Caco-2 (cell line): ENCODE measurements at regions of chr7 and their contacts with region 1.

Region 1: DNA sequence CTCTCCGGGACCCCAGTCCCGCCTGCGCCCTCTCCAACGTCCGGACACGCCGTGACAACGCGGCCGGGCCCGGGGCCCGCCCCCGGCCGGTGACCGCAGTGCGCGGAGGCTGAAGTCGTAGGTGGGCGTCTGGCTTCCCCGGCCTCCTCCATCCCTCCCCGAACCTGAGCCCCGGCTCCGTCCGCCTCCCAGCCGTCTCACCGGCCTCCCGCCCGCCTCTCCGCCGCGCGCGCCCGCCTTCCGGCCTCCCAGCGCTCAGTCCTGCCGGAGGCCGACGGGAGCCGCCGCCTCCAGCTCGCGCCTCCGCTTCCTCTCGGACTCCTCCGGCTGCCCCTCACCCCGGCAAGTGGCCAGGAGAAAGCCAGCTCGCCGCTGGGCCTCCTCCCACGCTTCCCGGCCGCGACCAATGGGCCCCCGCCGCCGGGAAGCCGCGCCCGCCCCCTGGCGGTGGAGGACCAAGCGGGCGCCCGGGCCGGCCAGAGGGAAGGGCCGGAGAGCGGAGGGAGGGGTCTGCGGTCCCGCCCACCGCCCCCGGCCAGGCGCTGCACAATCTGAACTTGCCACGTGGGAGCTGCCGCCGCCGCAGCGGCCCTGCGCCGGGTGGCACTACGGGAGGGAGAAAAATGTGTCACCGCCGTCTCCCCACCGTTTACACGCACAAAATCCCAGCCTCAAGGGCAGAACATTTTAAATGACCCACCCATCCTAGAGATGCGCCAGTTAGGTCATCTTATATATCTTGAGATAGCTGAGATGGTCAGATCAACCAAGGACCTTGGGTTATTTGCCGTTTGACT is at the start of gene FAM3C:
- DNase-seq: peak; percentile 90 to 97
- H3K4me3 ChIP-seq: peak within 1 kb of the TSS; percentile 74
- H3K4me3 Mint-ChIP-seq: peak within 1 kb of the TSS; percentile 88
- H3K27ac Mint-ChIP-seq: peak within 1 kb of the TSS; percentile 79
- H3K4me1 ChIP-seq: peaks cover 24% of the 10 kb centered on the region
- H3K4me1 Mint-ChIP-seq: peaks cover 7% of the 10 kb centered on the region
- H3K27me3 ChIP-seq: no peaks in the 10 kb centered on the region
- H3K27me3 Mint-ChIP-seq: no peaks in the 10 kb centered on the region
- CTCF ChIP-seq: peak; percentile 49 to 90
- total RNA-seq, gene FAM3C: 40.2 and 40.5 TPM in 2 replicates

Region 2: GRCh38 chr7:121337398-121337797 is 58.8 kb before region 1 on chr7:
- CTCF ChIA-PET with region 1: no interaction called
- POLR2A ChIA-PET with region 1: no interaction called
- intact Hi-C with region 1: no loop called
- DNase-seq: no peak
- H3K4me3 ChIP-seq: no peak overlapping the region
- H3K4me3 Mint-ChIP-seq: no peak overlapping the region
- H3K27ac Mint-ChIP-seq: no peak overlapping the region
- H3K4me1 ChIP-seq: no peaks in the 10 kb centered on the region
- H3K4me1 Mint-ChIP-seq: no peaks in the 10 kb centered on the region
- H3K27me3 ChIP-seq: no peaks in the 10 kb centered on the region; the same call in 1 of the 2 replicates
- H3K27me3 Mint-ChIP-seq: peaks cover 3% of the 10 kb centered on the region
- CTCF ChIP-seq: peak in 1 of 2 experiments; percentile 2

Region 3: GRCh38 chr7:121366852-121367431 is 29.2 kb before region 1 on chr7:
- CTCF ChIA-PET with region 1: interaction called, 18 read pairs
- POLR2A ChIA-PET with region 1: interaction called, 3 read pairs
- intact Hi-C with region 1: loop called (anchors 1 kb)
- DNase-seq: peak in 1 of 2 experiments; percentile 28
- H3K4me3 ChIP-seq: no peak overlapping the region
- H3K4me3 Mint-ChIP-seq: no peak overlapping the region
- H3K27ac Mint-ChIP-seq: no peak overlapping the region
- H3K4me1 ChIP-seq: no peaks in the 10 kb centered on the region
- H3K4me1 Mint-ChIP-seq: no peaks in the 10 kb centered on the region
- H3K27me3 ChIP-seq: no peaks in the 10 kb centered on the region
- H3K27me3 Mint-ChIP-seq: no peaks in the 10 kb centered on the region
- CTCF ChIP-seq: peak; percentile 55 to 67

Region 4: GRCh38 chr7:121406944-121407343 is 10.8 kb after region 1 on chr7:
- CTCF ChIA-PET with region 1: interaction called, 6 read pairs
- POLR2A ChIA-PET with region 1: no interaction called
- intact Hi-C with region 1: loop called (anchors 1 kb)
- DNase-seq: peak; percentile 65 to 78
- H3K4me3 ChIP-seq: no peak overlapping the region
- H3K4me3 Mint-ChIP-seq: no peak overlapping the region
- H3K27ac Mint-ChIP-seq: peak overlapping the region; percentile 79
- H3K4me1 ChIP-seq: peaks cover 20% of the 10 kb centered on the region
- H3K4me1 Mint-ChIP-seq: peaks cover 15% of the 10 kb centered on the region
- H3K27me3 ChIP-seq: no peaks in the 10 kb centered on the region
- H3K27me3 Mint-ChIP-seq: no peaks in the 10 kb centered on the region
- CTCF ChIP-seq: no peak

Region 5: GRCh38 chr7:121420979-121421378 is 24.8 kb after region 1 on chr7:
- CTCF ChIA-PET with region 1: interaction called, 3 read pairs
- POLR2A ChIA-PET with region 1: interaction called, 7 read pairs
- intact Hi-C with region 1: loop called (anchors 1 kb)
- DNase-seq: peak; percentile 69 to 81
- H3K4me3 ChIP-seq: no peak overlapping the region
- H3K4me3 Mint-ChIP-seq: peak overlapping the region; percentile 37
- H3K27ac Mint-ChIP-seq: peak overlapping the region; percentile 48
- H3K4me1 ChIP-seq: peaks cover 27% of the 10 kb centered on the region
- H3K4me1 Mint-ChIP-seq: peaks cover 8% of the 10 kb centered on the region
- H3K27me3 ChIP-seq: no peaks in the 10 kb centered on the region
- H3K27me3 Mint-ChIP-seq: no peaks in the 10 kb centered on the region
- CTCF ChIP-seq: no peak

Region 6: GRCh38 chr7:121437456-121438127 is 41.4 kb after region 1 on chr7:
- CTCF ChIA-PET with region 1: interaction called, 20 read pairs
- POLR2A ChIA-PET with region 1: interaction called, 9 read pairs
- intact Hi-C with region 1: loop called (anchors 2 kb)
- DNase-seq: no peak
- H3K4me3 ChIP-seq: no peak overlapping the region
- H3K4me3 Mint-ChIP-seq: peak overlapping the region; percentile 74
- H3K27ac Mint-ChIP-seq: peak overlapping the region; percentile 81
- H3K4me1 ChIP-seq: peaks cover 23% of the 10 kb centered on the region
- H3K4me1 Mint-ChIP-seq: peaks cover 13% of the 10 kb centered on the region
- H3K27me3 ChIP-seq: no peaks in the 10 kb centered on the region
- H3K27me3 Mint-ChIP-seq: no peaks in the 10 kb centered on the region
- CTCF ChIP-seq: no peak

Region 7: DNA sequence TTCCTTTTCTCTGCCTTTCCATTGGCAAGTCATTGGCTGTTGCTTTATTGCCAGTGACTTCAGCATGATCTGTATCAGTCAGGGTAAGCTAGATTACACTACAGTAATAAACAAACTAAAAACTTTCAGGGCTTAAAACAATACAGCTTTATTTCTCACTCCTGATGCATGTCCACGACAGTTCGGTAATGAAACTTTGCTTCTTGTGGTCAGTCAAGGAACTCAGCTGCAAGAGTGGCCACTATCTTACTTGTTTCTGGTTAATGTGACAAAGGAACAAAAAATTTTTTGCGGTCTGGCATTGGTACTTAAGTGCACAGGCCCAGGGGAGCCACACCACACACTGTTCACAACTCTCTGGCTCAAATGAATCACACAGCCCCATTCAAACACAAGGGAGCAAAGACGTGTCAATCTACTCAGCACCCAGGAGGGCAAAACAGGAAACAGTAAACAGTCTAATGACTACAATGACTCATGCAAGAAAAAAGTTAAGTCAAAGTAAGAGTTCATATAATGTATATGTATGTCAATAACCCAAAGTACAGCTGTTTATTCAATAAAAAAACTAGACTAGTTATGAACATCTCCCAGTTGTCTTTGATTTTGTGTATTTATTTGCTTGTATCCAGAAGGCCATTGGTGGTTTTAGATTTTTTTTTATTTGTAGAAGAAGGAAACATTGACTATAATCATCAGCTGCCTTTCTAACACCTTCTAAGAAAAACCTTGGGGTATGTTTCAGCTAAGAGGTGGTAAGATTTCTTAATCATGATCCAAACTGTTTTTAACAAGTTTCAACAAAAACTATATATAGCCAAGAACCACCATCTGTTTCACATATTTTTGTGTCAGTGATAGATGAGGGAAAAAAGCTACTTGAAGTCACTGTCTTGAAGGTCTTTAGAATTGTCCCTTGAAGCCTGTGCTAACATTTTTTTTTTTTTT is 134.3 kb after region 1 on chr7:
- CTCF ChIA-PET with region 1: no interaction called
- POLR2A ChIA-PET with region 1: no interaction called
- intact Hi-C with region 1: no loop called
- DNase-seq: no peak
- H3K4me3 ChIP-seq: no peak overlapping the region
- H3K4me3 Mint-ChIP-seq: no peak overlapping the region
- H3K27ac Mint-ChIP-seq: no peak overlapping the region
- H3K4me1 ChIP-seq: no peaks in the 10 kb centered on the region
- H3K4me1 Mint-ChIP-seq: no peaks in the 10 kb centered on the region
- H3K27me3 ChIP-seq: no peaks in the 10 kb centered on the region
- H3K27me3 Mint-ChIP-seq: peaks cover 7% of the 10 kb centered on the region
- CTCF ChIP-seq: no peak

Region 8: DNA sequence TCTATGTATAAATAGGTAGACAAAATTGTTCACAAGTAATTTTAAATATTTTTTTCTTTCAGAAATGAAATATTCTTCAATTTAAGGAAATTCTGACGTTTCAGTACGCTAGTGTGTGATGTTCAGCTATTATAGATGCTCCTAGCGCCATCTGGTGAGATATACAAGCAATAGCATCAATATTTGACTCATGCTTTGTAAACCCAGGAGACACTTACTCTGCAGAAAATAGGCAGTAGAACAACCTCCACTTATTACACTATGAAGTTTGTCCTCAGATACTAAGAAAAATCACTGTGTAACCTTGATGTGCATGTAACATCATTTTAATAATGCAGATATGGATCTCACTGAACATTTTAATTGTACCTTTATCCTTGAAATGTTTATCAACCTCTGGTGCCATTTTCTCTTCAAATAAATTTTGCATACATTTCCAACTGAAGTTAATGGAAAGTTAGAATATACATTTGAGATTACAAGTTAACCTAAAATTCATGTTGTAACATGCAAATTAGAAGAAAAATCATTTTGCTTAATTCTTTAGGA is 151.5 kb after region 1 on chr7:
- CTCF ChIA-PET with region 1: interaction called, 4 read pairs
- POLR2A ChIA-PET with region 1: interaction called, 3 read pairs
- intact Hi-C with region 1: loop called (anchors 1 kb)
- DNase-seq: peak in 1 of 2 experiments; percentile 20
- H3K4me3 ChIP-seq: no peak overlapping the region
- H3K4me3 Mint-ChIP-seq: no peak overlapping the region
- H3K27ac Mint-ChIP-seq: no peak overlapping the region
- H3K4me1 ChIP-seq: peaks cover 11% of the 10 kb centered on the region; the same call in 1 of the 2 replicates
- H3K4me1 Mint-ChIP-seq: no peaks in the 10 kb centered on the region
- H3K27me3 ChIP-seq: no peaks in the 10 kb centered on the region
- H3K27me3 Mint-ChIP-seq: peaks cover 3% of the 10 kb centered on the region
- CTCF ChIP-seq: peak; percentile 67 to 74